ENCODE measurements at regions of chr16 and their contacts with region 1.

Region 1: GRCh38 chr16:80341263-80341662 is 199.5 kb upstream of the DYNLRB2 start:
- DNase-seq: peak; percentile 12
- ATAC-seq: peak; percentile 96
- H3K4me3 ChIP-seq: no peak overlapping the region
- H3K27ac ChIP-seq: no peak overlapping the region
- H3K4me1 ChIP-seq: peaks cover 7% of the 10 kb centered on the region
- H3K27me3 ChIP-seq: peaks cover 0 to 5% of the 10 kb centered on the region in 2 experiments; a peak in 1 of 5 replicates
- CTCF ChIP-seq: peak; percentile 62
- EP300 ChIP-seq: no peak
- POLR2A ChIP-seq: no peak
- RAD21 ChIP-seq: peak; percentile 53

Region 2: GRCh38 chr16:79970551-79971236 is 370.6 kb before region 1 on chr16:
- CTCF ChIA-PET with region 1: no interaction called
- POLR2A ChIA-PET with region 1: no interaction called
- in situ Hi-C with region 1: no loop called
- intact Hi-C with region 1: no loop called
- DNase-seq: no peak
- ATAC-seq: no peak
- H3K4me3 ChIP-seq: no peak overlapping the region
- H3K27ac ChIP-seq: no peak overlapping the region
- H3K4me1 ChIP-seq: no peaks in the 10 kb centered on the region
- H3K27me3 ChIP-seq: no peaks in the 10 kb centered on the region
- CTCF ChIP-seq: no peak
- EP300 ChIP-seq: no peak
- POLR2A ChIP-seq: no peak
- RAD21 ChIP-seq: no peak

Region 3: DNA sequence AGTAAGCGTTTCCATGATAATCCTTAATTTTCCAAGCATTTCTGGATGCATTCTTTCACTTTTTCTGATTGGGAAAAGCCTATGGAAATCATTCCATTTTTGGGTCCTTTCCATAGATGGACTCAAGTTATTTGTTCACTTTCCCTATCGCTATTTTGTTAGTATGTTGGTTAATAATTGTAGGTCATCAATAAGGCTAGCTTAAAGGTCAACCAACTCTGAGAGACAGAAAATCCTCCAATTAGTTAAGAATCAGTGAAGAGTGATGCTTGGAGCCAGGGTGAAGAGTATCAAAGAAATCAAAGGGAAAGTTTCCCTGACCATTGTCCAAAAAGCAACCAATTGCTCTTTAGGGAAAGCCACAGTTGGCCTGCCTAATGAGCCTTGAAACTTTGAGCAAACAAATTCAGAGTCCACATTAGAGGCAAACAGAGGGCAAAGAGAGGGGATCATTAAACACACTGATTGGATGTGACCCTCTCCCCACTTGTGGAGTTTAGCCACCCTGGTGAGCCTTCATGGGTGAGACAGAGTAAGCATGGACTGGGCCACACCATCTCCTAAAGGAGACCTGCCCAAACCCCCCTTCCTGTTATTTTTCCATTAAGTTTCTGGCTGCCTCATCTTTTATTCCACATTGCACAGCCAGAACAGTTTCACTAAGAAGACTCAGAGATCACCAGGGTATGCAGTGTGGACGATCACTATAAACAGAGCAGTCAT is 66.2 kb after region 1 on chr16:
- CTCF ChIA-PET with region 1: no interaction called
- POLR2A ChIA-PET with region 1: no interaction called
- in situ Hi-C with region 1: no loop called
- intact Hi-C with region 1: loop called (anchors 2 kb)
- DNase-seq: peak; percentile 92
- ATAC-seq: peak; percentile 99
- H3K4me3 ChIP-seq: peak overlapping the region in 2 of 3 experiments; percentile 8 to 14; a peak in 1 of 6 replicates
- H3K27ac ChIP-seq: peak overlapping the region; percentile 85
- H3K4me1 ChIP-seq: peaks cover 58% of the 10 kb centered on the region
- H3K27me3 ChIP-seq: no peaks in the 10 kb centered on the region
- CTCF ChIP-seq: 0 out of 2 replicates have a peak, but pooled peaks have one; percentile 11
- EP300 ChIP-seq: peak in 1 of 2 experiments; percentile 87; a peak in 2 of 4 replicates
- POLR2A ChIP-seq: no peak
- RAD21 ChIP-seq: no peak